ENCODE measurements at regions of chr15 and their contacts with region 1.

Region 1: DNA sequence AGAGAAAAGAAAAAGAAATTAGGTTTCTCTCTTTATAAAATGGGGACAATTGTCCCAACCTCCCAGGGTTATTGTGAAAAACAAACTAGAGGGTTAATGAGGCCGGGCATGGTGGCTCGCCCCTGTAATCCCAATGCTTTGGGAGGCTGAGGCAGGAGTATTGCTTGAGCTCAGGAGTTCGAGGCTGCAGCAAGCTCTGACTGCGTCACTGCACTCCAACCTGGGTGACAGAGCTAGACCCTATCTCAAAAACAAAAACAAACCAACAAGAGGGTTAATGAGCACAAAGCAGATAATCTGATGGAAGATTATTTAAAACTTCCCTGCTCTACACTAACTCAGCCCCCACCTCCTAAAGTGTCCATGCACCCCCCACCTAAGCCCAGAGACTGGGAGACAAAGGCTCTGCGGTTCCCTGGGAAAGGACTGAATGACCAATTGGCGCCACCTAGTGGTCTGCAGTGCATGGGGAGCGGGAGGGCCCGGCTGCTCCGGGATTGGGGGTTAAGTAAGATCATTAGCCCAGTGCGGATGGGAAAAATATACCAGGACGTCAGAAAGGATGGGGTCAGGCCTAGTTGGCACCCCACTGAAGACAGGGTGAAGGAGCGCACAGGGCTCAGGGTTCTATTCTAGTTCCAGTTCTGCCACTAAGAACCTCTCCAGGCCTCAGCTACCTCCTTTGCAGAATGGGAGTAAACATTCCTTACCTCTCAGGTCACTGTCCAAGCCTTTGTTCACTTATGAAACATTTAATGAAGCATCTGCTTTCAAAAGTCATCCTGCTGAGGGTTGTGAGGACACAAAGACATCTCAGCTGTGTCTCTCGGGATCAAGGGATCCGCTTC is 15.6 kb downstream of the PIF1 start:
- DNase-seq: peak; percentile 67
- H3K4me3 ChIP-seq: no peak overlapping the region
- H3K27ac ChIP-seq: no peak overlapping the region
- H3K4me1 ChIP-seq: no peaks in the 10 kb centered on the region
- H3K27me3 ChIP-seq: peaks cover 0 to 6% of the 10 kb centered on the region in 2 experiments
- CTCF ChIP-seq: peak; percentile 94 to 97
- POLR2A ChIP-seq: no peak

Region 2: GRCh38 chr15:64527263-64527984 is 282.4 kb before region 1 on chr15:
- CTCF ChIA-PET with region 1: no interaction called
- POLR2A ChIA-PET with region 1: no interaction called
- dilution Hi-C with region 1: no loop called
- intact Hi-C with region 1: no loop called
- DNase-seq: peak; percentile 55
- H3K4me3 ChIP-seq: no peak overlapping the region
- H3K27ac ChIP-seq: peak overlapping the region; percentile 9
- H3K4me1 ChIP-seq: peaks cover 29% of the 10 kb centered on the region
- H3K27me3 ChIP-seq: no peaks in the 10 kb centered on the region
- CTCF ChIP-seq: no peak
- POLR2A ChIP-seq: no peak

Region 3: GRCh38 chr15:64681424-64682024 is 128.3 kb before region 1 on chr15:
- CTCF ChIA-PET with region 1: interaction called, 21 read pairs
- POLR2A ChIA-PET with region 1: no interaction called
- dilution Hi-C with region 1: no loop called
- intact Hi-C with region 1: loop called (anchors 1 kb)
- DNase-seq: peak; percentile 70
- H3K4me3 ChIP-seq: no peak overlapping the region
- H3K27ac ChIP-seq: no peak overlapping the region
- H3K4me1 ChIP-seq: no peaks in the 10 kb centered on the region
- H3K27me3 ChIP-seq: no peaks in the 10 kb centered on the region
- CTCF ChIP-seq: peak; percentile 62 to 72
- POLR2A ChIP-seq: no peak

Region 4: GRCh38 chr15:64749999-64750657 is 59.7 kb before region 1 on chr15:
- CTCF ChIA-PET with region 1: interaction called, 19 read pairs
- POLR2A ChIA-PET with region 1: no interaction called
- dilution Hi-C with region 1: no loop called
- intact Hi-C with region 1: no loop called
- DNase-seq: no peak
- H3K4me3 ChIP-seq: no peak overlapping the region
- H3K27ac ChIP-seq: no peak overlapping the region
- H3K4me1 ChIP-seq: no peaks in the 10 kb centered on the region
- H3K27me3 ChIP-seq: no peaks in the 10 kb centered on the region
- CTCF ChIP-seq: no peak
- POLR2A ChIP-seq: no peak

Region 5: GRCh38 chr15:64825431-64826294 is 15.8 kb after region 1 on chr15 and contains the start of gene PIF1:
- CTCF ChIA-PET with region 1: interaction called, 61 read pairs
- POLR2A ChIA-PET with region 1: interaction called, 3 read pairs
- dilution Hi-C with region 1: no loop called
- intact Hi-C with region 1: no loop called
- DNase-seq: peak; percentile 97
- H3K4me3 ChIP-seq: peak within 1 kb of the TSS; percentile 46 to 84 (median 73)
- H3K27ac ChIP-seq: peak within 1 kb of the TSS; percentile 48
- H3K4me1 ChIP-seq: peaks cover 15% of the 10 kb centered on the region
- H3K27me3 ChIP-seq: no peaks in the 10 kb centered on the region
- CTCF ChIP-seq: peak in 1 of 2 donors; percentile 4
- POLR2A ChIP-seq: peak; percentile 67
- total RNA-seq, gene PIF1: 45.4 and 52.7 TPM in 2 replicates

Region 6: GRCh38 chr15:64905119-64905831 is 95.4 kb after region 1 on chr15:
- CTCF ChIA-PET with region 1: interaction called, 34 read pairs
- POLR2A ChIA-PET with region 1: no interaction called
- dilution Hi-C with region 1: no loop called
- intact Hi-C with region 1: loop called (anchors 1 kb)
- DNase-seq: peak; percentile 79
- H3K4me3 ChIP-seq: peak overlapping the region; percentile 21 to 48 (median 35)
- H3K27ac ChIP-seq: no peak overlapping the region
- H3K4me1 ChIP-seq: peaks cover 11% of the 10 kb centered on the region
- H3K27me3 ChIP-seq: no peaks in the 10 kb centered on the region
- CTCF ChIP-seq: peak; percentile 89 to 92
- POLR2A ChIP-seq: no peak